Activated naive CD8-positive, alpha-beta T cell treated with anti-CD3 and anti-CD28 coated beads, Interleukin-2, amount 10 ng/mL, durations not matched to agents 7 days and 5 days (primary cell): ENCODE measurements at regions of chr22 and their contacts with region 1.

Region 1: DNA sequence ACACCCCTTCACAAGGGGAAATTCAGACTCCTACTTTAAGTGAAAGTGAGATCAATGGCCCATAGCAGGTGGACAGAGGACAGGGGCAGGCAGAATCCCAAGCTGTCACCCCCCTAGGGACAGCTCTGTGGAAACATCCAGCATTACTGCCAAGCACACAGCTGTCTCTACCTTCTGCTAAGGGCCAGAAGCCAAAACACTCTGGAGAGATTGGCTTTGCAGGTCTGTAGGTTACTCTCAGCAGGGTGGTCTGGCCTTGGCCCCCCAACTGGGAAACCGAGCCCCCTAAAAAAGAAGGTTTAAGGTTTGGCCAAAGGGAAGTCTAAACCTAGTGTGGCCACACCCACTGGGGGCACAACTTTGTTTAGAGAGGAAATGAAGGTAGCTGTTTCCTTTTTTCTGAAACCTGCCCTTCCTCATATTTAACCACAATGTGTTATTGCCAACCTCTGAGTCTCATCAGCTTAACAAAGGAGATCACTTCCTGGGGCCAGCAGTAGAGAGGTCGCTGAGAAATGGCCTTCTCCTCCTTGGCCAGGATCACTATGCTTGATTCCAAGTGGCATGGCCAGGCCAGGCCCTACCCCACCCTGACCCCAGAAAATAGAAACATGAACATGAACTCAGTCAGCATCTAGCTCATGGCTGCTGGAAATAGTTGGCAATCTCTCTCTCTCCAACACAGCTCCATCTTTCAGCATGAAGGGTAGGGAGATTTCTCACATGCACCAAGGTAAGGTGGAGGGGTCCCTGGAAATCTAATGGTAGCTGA is 25.9 kb upstream of the SCARF2 start:
- DNase-seq: peak; percentile 56
- ATAC-seq: peak; percentile 57
- H3K4me3 Mint-ChIP-seq: peak overlapping the region; percentile 72
- H3K27ac Mint-ChIP-seq: peak overlapping the region; percentile 98
- H3K4me1 Mint-ChIP-seq: peaks cover 34% of the 10 kb centered on the region
- H3K27me3 Mint-ChIP-seq: no peaks in the 10 kb centered on the region

Region 2: GRCh38 chr22:20393909-20394691 is 69.4 kb before region 1 on chr22 and contains the start of gene ZNF74:
- POLR2A ChIA-PET with region 1: interaction called, 10 read pairs
- DNase-seq: peak; percentile 86
- ATAC-seq: peak; percentile 97
- H3K4me3 Mint-ChIP-seq: peak within 1 kb of the TSS; percentile 88
- H3K27ac Mint-ChIP-seq: peak within 1 kb of the TSS; percentile 91
- H3K4me1 Mint-ChIP-seq: peaks cover 22% of the 10 kb centered on the region
- H3K27me3 Mint-ChIP-seq: no peaks in the 10 kb centered on the region
- total RNA-seq, gene ZNF74: 10.7 to 13.3 TPM

Region 3: GRCh38 chr22:20437613-20438426 is 25.7 kb before region 1 on chr22 and contains the start of gene SCARF2:
- POLR2A ChIA-PET with region 1: no interaction called
- DNase-seq: peak; percentile 41
- ATAC-seq: peak; percentile 27
- H3K4me3 Mint-ChIP-seq: peak within 1 kb of the TSS; percentile 77
- H3K27ac Mint-ChIP-seq: no peak within 1 kb of the TSS
- H3K4me1 Mint-ChIP-seq: peaks cover 9% of the 10 kb centered on the region
- H3K27me3 Mint-ChIP-seq: peaks cover 48% of the 10 kb centered on the region
- total RNA-seq, gene SCARF2: 1.5 to 1.7 TPM

Region 4: DNA sequence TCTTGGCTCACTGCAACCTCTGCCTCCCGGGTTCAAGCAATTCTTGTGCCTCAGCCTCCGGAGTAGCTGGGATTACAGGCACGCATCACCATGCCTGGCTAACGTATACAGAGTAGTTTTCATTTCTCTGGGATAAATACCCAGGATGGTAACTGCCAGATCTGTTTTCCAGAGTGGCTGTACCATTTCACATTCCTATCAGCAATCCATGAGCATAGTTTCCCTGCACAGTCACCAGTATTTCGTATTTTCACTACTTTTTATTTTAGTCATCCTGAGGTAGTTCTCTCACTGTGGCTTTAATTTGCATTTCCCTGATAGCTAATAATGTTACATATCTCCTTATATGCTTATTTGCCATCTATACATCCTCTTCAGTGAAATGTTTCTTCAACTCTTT is 14.9 kb before region 1 on chr22:
- POLR2A ChIA-PET with region 1: no interaction called
- DNase-seq: no peak
- ATAC-seq: no peak
- H3K4me3 Mint-ChIP-seq: no peak overlapping the region
- H3K27ac Mint-ChIP-seq: no peak overlapping the region
- H3K4me1 Mint-ChIP-seq: peaks cover 1% of the 10 kb centered on the region
- H3K27me3 Mint-ChIP-seq: no peaks in the 10 kb centered on the region

Region 5: GRCh38 chr22:20495861-20496681 is 32.6 kb after region 1 on chr22:
- POLR2A ChIA-PET with region 1: interaction called, 11 read pairs
- DNase-seq: peak; percentile 95
- ATAC-seq: peak; percentile 99
- H3K4me3 Mint-ChIP-seq: peak overlapping the region; percentile 98
- H3K27ac Mint-ChIP-seq: peak overlapping the region; percentile 90
- H3K4me1 Mint-ChIP-seq: peaks cover 19% of the 10 kb centered on the region
- H3K27me3 Mint-ChIP-seq: no peaks in the 10 kb centered on the region

Region 6: DNA sequence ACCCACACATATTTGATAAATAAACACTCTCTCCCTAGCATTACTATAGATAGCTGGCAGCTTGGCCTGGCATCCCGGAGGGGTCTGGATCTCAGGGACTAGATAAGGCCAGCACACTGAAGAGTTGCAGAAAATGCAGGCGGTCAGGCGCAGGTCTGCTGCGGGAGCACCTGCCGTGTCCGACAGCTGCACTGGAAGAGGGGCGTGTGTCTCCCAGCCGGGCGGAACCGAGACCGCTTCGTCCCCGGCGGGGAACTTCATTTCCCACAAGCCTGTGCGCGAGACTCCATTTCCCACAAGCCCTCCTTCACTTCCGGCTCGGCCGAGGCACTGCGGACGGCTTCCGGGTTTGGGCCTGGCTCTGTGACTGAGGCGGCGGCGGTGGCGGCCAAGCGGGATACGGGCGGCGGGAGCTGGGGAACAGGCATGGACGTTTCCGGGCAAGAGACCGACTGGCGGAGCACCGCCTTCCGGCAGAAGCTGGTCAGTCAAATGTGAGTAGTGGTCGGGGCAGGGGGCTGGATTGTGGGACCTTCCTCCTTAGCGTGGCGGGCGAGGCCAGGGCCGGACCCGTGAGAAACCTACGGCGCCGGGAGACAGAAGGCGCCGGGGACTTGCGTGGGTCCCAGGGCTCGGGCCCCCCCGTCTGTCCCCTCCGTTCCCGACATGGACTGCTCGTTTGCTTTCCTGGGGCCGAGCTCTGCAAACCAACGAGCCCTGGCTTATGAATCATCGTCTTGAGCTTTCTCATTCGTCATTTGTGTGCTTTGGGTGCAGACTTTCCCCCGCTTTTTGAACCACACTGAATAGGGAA is 44.0 kb after region 1 on chr22 and contains the start of gene MED15:
- POLR2A ChIA-PET with region 1: interaction called, 23 read pairs
- DNase-seq: peak; percentile 89
- ATAC-seq: peak; percentile 85
- H3K4me3 Mint-ChIP-seq: peak within 1 kb of the TSS; percentile 97
- H3K27ac Mint-ChIP-seq: peak within 1 kb of the TSS; percentile 98
- H3K4me1 Mint-ChIP-seq: peaks cover 39% of the 10 kb centered on the region
- H3K27me3 Mint-ChIP-seq: no peaks in the 10 kb centered on the region
- total RNA-seq, gene MED15: 227 to 233 TPM